ENCODE measurements at regions of chr1 and their contacts with region 1.

Region 1: GRCh38 chr1:163315773-163316374 is 5.9 kb upstream of the NUF2 start:
- DNase-seq: peak; percentile 41
- ATAC-seq: no peak

Region 2: GRCh38 chr1:162854245-162854882 is 461.5 kb before region 1 on chr1:
- intact Hi-C with region 1: loop called in 1 of 2 experiments (anchors 5 kb)
- DNase-seq: peak; percentile 58
- ATAC-seq: peak in 1 of 2 donors; percentile 66

Region 3: DNA sequence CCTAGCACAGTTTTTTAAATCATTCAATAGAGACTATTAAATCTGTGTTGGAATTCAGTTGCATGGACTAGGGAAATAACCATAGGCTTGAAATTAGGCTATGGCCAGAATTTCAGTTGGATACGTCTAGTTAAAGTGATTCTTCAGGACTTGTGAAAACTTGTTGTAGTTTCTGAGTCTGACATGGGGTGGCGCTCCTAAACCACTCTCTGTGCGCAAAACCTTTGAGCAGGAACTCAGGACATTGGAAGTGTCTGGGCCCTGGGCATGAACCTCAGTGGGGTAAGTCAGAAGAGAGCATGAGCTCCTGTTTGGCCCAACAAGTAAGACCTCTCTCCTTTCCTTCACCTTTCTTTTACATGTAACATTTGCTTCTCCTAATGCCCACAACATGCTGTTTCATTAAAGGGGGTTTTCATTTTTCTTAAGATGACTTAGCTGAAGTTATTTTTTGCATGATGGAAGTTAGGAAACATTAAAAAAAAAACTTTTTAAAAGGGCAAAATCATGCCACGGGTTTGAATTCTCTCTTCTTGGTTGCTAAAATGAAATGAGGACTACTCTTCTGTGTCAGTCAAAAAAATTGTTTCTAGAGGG is 437.8 kb before region 1 on chr1:
- intact Hi-C with region 1: loop called (anchors 5 to 10 kb)
- DNase-seq: peak; percentile 53
- ATAC-seq: peak; percentile 77 to 84

Region 4: DNA sequence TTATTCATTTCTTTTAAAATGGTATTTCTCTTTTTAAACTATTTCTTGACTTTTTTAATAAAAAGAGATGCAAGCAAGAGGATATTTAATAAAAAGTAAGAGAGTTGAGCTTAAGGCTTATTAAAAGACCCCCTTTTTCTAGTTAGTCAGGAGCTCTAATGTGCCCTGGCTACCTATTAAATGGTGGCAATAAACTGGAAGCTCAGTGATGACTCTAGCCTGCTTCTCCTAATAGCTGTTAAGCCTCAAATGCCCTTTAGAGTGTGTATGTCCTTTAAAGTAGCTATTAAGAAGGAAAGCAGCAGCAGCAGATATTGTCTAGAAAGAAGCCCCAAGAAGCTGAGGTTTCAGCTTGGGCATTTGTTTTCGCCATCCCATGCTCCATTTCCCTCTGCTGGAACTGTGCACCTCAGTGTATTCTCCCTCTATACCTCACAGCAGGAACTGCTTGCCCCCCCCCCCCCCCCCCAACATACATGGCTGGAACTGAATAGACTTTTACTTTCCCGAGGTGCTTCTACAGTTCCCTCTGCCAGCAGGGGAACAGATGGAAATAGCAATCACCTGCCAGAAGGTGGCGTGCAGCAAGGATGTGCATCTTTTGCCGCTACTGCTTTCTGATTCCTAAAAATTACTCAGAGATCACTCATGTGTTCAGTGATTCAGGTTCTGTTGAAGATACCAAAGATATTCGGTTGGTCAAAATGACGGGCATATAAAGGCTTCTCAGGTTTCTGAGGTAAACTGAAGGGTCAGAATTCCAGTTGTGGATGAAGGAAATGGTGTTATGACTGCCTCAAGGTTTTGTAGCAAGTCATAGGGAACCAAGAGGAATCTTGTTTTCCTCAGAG is 244.2 kb before region 1 on chr1:
- intact Hi-C with region 1: loop called in 1 of 2 experiments (anchors 5 kb)
- DNase-seq: peak; percentile 69
- ATAC-seq: peak; percentile 38 to 55

Region 5: GRCh38 chr1:163174524-163175437 is 141.1 kb before region 1 on chr1:
- intact Hi-C with region 1: loop called (anchors 10 kb)
- DNase-seq: peak; percentile 75
- ATAC-seq: peak; percentile 75 to 78

Region 6: DNA sequence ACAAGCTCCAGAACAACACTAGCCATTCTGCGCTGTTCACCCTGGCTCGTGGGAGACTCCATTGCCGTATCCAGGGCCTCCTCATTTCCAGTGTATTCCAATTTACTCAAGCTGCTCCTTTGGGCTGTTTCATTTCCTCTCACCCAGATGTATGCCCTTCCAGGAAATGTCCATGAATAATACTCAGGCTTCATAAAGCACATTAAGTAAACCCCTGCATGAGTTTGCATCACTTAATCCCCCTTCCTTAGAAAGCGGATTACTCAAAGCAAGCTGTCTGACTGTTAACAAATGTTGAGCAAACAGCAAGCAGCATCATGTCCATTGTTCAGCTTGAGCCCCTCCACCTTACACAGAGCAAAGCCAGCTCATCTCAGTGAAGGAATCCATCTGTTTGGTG is 839.5 kb after region 1 on chr1:
- intact Hi-C with region 1: no loop called
- DNase-seq: no peak
- ATAC-seq: no peak

Measured in left cardiac atrium (tissue), 4 donors.